ENCODE measurements at regions of chr15 and their contacts with region 1.

Region 1: GRCh38 chr15:73697033-73697467 is 12.9 kb downstream of the CD276 start:
- DNase-seq: peak; percentile 31
- ATAC-seq: peak; percentile 43
- H3K4me3 ChIP-seq: no peak overlapping the region
- H3K4me3 Mint-ChIP-seq: no peak overlapping the region
- H3K27ac ChIP-seq: no peak overlapping the region
- H3K27ac Mint-ChIP-seq: no peak overlapping the region
- H3K4me1 ChIP-seq: peaks cover 6 to 7% of the 10 kb centered on the region in 2 donors
- H3K4me1 Mint-ChIP-seq: peaks cover 9% of the 10 kb centered on the region
- H3K27me3 ChIP-seq: peaks cover 0 to 40% (median 6%) of the 10 kb centered on the region in 4 experiments
- H3K27me3 Mint-ChIP-seq: peaks cover 55% of the 10 kb centered on the region
- CTCF ChIP-seq: no peak

Region 2: GRCh38 chr15:72785432-72785831 is 911.6 kb before region 1 on chr15:
- CTCF ChIA-PET with region 1: no interaction called
- POLR2A ChIA-PET with region 1: no interaction called
- intact Hi-C with region 1: no loop called
- DNase-seq: no peak
- ATAC-seq: no peak
- H3K4me3 ChIP-seq: no peak overlapping the region
- H3K4me3 Mint-ChIP-seq: no peak overlapping the region
- H3K27ac ChIP-seq: no peak overlapping the region
- H3K27ac Mint-ChIP-seq: no peak overlapping the region
- H3K4me1 ChIP-seq: peaks cover 27 to 28% of the 10 kb centered on the region in 2 donors
- H3K4me1 Mint-ChIP-seq: peaks cover 27% of the 10 kb centered on the region
- H3K27me3 ChIP-seq: no peaks in the 10 kb centered on the region
- H3K27me3 Mint-ChIP-seq: no peaks in the 10 kb centered on the region
- CTCF ChIP-seq: no peak

Region 3: GRCh38 chr15:73240866-73241499 is 456.1 kb before region 1 on chr15:
- CTCF ChIA-PET with region 1: interaction called, 50 read pairs
- POLR2A ChIA-PET with region 1: no interaction called
- intact Hi-C with region 1: no loop called
- DNase-seq: peak; percentile 72
- ATAC-seq: peak; percentile 36
- H3K4me3 ChIP-seq: no peak overlapping the region
- H3K4me3 Mint-ChIP-seq: no peak overlapping the region
- H3K27ac ChIP-seq: no peak overlapping the region
- H3K27ac Mint-ChIP-seq: no peak overlapping the region
- H3K4me1 ChIP-seq: no peaks in the 10 kb centered on the region
- H3K4me1 Mint-ChIP-seq: no peaks in the 10 kb centered on the region
- H3K27me3 ChIP-seq: no peaks in the 10 kb centered on the region
- H3K27me3 Mint-ChIP-seq: peaks cover 22% of the 10 kb centered on the region
- CTCF ChIP-seq: peak; percentile 94

Region 4: DNA sequence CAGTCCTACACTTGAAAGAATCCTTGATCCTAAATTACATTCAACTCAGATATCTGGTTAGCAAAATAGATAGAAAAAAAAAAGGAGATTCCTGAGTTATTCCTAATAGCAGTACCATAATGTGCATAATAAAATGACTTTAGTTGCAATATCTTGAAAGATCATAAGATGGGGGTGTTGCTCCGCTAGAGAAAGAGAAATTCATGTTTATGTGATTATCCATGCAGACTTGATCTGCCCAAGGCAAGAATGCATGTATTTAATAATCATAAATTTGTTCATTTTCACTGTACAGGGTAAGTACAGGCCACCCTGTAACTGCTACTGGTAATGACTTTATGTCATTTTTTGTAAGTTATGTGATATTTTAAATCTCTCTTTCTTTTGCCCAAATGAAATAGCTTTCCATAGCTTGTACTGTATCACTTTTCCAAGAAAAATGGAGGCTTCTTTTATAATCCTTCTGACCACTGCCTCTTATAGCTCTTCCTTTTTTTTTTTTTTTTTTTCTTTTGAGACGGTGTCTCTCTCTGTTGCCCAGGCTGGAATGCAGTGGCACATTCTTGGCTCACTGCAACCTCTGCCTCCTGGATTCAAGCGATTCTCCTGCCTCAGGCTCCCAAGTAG is 412.8 kb before region 1 on chr15:
- CTCF ChIA-PET with region 1: interaction called, 3 read pairs
- POLR2A ChIA-PET with region 1: no interaction called
- intact Hi-C with region 1: loop called (anchors 1 kb)
- DNase-seq: peak; percentile 13
- ATAC-seq: no peak
- H3K4me3 ChIP-seq: no peak overlapping the region
- H3K4me3 Mint-ChIP-seq: no peak overlapping the region
- H3K27ac ChIP-seq: no peak overlapping the region
- H3K27ac Mint-ChIP-seq: no peak overlapping the region
- H3K4me1 ChIP-seq: peaks cover 10 to 22% of the 10 kb centered on the region in 2 donors
- H3K4me1 Mint-ChIP-seq: peaks cover 23% of the 10 kb centered on the region
- H3K27me3 ChIP-seq: no peaks in the 10 kb centered on the region
- H3K27me3 Mint-ChIP-seq: no peaks in the 10 kb centered on the region
- CTCF ChIP-seq: peak; percentile 20

Region 5: GRCh38 chr15:73560501-73561117 is 136.4 kb before region 1 on chr15:
- CTCF ChIA-PET with region 1: interaction called, 34 read pairs
- POLR2A ChIA-PET with region 1: no interaction called
- intact Hi-C with region 1: loop called (anchors 1 kb)
- DNase-seq: peak; percentile 55
- ATAC-seq: peak; percentile 39
- H3K4me3 ChIP-seq: no peak overlapping the region
- H3K4me3 Mint-ChIP-seq: no peak overlapping the region
- H3K27ac ChIP-seq: no peak overlapping the region
- H3K27ac Mint-ChIP-seq: no peak overlapping the region
- H3K4me1 ChIP-seq: no peaks in the 10 kb centered on the region
- H3K4me1 Mint-ChIP-seq: no peaks in the 10 kb centered on the region
- H3K27me3 ChIP-seq: no peaks in the 10 kb centered on the region
- H3K27me3 Mint-ChIP-seq: no peaks in the 10 kb centered on the region
- CTCF ChIP-seq: peak; percentile 66

Region 6: GRCh38 chr15:73677146-73677607 is 19.9 kb before region 1 on chr15:
- CTCF ChIA-PET with region 1: interaction called, 55 read pairs
- POLR2A ChIA-PET with region 1: no interaction called
- intact Hi-C with region 1: loop called (anchors 1 kb)
- DNase-seq: peak; percentile 55
- ATAC-seq: no peak
- H3K4me3 ChIP-seq: no peak overlapping the region
- H3K4me3 Mint-ChIP-seq: no peak overlapping the region
- H3K27ac ChIP-seq: no peak overlapping the region
- H3K27ac Mint-ChIP-seq: no peak overlapping the region
- H3K4me1 ChIP-seq: no peaks in the 10 kb centered on the region
- H3K4me1 Mint-ChIP-seq: no peaks in the 10 kb centered on the region
- H3K27me3 ChIP-seq: peaks cover 0 to 18% (median 9%) of the 10 kb centered on the region in 4 experiments
- H3K27me3 Mint-ChIP-seq: peaks cover 41% of the 10 kb centered on the region
- CTCF ChIP-seq: peak; percentile 79

Measured in B cell (primary cell).